ENCODE measurements at regions of chr10 and their contacts with region 1.

Region 1: DNA sequence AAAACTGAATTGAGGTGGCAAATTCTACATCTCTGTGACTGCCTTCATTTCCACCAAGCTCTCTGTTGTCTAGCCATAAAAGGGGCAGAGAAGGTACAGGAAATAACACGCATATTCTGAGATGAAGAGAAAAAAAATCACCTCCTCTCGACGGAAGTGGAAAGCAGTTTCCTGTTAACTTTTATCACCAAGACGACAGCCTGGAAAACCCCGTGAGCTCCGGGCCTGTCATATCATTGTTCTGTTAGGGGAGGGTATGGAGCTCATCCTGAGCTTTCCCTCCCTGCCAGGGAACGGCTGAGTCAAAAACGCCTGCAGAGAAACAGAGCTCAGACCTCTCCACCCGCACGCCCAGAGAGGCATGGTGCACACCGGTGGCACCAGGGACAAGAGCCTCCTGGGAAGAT is 200.3 kb downstream of the PRPF18 start:
- DNase-seq: peak in 3 of 5 donors; percentile 27 to 39 (median 29)
- ATAC-seq: peak in 2 of 4 donors; percentile 15 to 61
- H3K4me3 ChIP-seq: peak overlapping the region in 1 of 12 donors; percentile 25
- H3K27ac ChIP-seq: peak overlapping the region in 9 of 12 donors; percentile 3 to 81 (median 20)
- H3K4me1 ChIP-seq: peaks cover 3 to 47% (median 28%) of the 10 kb centered on the region in 12 donors
- H3K27me3 ChIP-seq: no peaks in the 10 kb centered on the region
- CTCF ChIP-seq: no peak
- POLR2A ChIP-seq: no peak

Region 2: DNA sequence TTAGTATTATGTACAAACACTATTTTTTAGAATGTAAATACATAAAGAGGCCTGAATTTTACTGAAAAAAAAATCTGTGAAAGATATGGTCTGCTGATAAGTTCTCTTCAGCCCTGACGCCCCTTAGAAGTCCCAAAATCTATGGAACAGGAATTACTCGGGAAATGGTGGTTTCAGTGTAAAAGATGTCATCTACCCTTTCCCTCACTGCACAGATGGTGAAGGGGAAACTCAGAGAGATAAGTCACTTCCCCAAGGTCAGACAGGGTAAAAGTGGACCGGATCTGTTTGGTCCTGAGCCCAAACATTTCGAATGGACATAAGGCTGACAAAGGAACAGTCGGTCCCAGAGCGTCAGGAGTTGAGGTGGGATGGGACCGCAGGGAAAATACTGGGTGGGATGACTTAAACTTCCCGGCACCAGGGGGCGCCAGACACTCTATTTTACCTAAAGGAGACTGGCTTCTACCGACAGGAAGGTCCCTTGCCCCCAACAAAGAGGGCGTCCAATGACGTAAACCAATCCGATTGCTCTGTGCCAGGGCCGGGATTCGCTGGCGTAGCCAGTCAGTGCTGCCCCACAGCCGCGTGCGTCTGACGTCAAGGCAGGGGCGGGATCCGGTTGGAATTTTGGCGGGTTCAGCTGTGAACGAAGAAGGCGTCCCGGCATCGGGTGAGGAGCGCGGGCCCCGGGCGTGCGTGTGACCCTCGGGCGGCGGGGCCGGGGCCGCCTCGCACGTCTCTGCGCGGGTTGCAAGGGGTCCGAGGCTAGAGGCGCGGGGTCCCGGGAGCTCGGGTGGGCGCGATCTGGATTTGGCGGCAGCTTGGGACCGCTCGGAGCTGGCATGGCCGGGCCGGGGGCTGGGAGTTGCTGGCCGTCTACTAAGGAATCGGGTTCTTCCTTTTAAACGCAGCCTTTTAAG is 625.8 kb before region 1 on chr10 and contains the start of gene MCM10:
- intact Hi-C with region 1: no loop called
- DNase-seq: peak; percentile 97 to 98 (median 98)
- ATAC-seq: peak; percentile 100
- H3K4me3 ChIP-seq: peak within 1 kb of the TSS in 11 of 12 donors; percentile 24 to 72 (median 51)
- H3K27ac ChIP-seq: no peak within 1 kb of the TSS
- H3K4me1 ChIP-seq: peaks cover 0 to 18% (median 9%) of the 10 kb centered on the region in 12 donors
- H3K27me3 ChIP-seq: no peaks in the 10 kb centered on the region
- CTCF ChIP-seq: peak; percentile 82 to 95 (median 88)
- POLR2A ChIP-seq: no peak
- total RNA-seq, gene MCM10: 0.16 to 4.2 (median 0.36) TPM in 6 of 9 donors, not detected in the others

Region 3: DNA sequence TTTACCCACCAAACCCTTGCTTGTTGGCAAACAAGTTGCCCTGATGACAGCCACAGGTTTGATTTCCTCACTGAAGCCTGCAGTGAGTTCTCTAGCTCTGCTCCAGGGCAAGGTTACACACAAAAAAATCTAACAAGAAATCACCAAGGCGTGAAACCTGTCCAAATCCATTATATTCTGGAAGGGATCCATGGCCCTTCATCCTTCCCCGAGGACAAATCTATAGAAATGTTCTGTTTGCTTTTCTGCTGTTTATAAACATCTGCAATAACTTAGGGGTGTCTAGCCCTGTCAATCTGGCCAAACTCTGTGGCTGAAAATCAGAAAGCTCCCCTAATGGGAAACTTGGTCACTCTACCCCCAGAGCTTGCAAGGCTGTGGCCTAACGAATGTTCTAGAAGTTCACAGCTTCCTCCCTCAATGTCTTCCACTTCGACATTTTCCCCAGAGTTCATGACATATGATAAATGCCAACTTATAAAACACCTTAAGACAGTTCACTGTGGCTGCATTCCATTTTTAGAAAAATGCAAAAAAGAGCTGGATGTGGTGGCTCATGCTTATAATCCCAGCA is 35.7 kb before region 1 on chr10:
- intact Hi-C with region 1: no loop called
- DNase-seq: no peak
- ATAC-seq: no peak
- H3K4me3 ChIP-seq: no peak overlapping the region
- H3K27ac ChIP-seq: no peak overlapping the region
- H3K4me1 ChIP-seq: peaks cover 0 to 5% (median 0%) of the 10 kb centered on the region in 12 donors
- H3K27me3 ChIP-seq: no peaks in the 10 kb centered on the region
- CTCF ChIP-seq: no peak
- POLR2A ChIP-seq: no peak

Region 4: DNA sequence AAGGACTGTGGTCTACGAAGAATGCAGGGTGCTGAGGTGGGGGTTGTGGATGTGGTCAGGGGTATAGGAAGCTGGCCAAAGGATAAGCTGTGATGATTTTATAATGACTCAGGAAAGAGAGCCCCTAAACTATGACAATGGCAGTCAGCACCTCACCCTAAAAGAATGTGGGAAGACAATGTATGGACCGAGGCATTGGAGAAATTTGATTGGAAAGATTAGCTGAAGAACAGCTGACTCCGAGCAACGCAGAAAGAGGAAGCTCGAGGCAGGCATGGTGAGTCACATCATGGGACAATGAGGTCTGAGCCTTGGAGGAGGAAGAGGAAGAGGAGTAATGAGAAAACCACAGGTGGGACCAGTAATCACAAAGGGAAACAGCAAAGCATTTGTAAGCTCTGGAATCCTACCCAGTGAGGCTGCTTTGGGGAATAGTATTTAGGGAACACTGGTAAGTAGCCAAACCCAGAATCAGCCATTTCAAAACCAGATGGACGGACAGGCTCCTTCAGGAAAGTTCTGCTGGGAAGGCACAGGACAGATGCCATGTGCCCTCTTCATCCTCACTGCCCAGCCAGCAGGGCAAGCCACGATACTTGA is 95.2 kb after region 1 on chr10:
- intact Hi-C with region 1: loop called in 1 of 10 experiments (anchors 5 kb)
- DNase-seq: peak in 4 of 5 donors; percentile 65 to 73 (median 70)
- ATAC-seq: peak; percentile 69 to 90 (median 79)
- H3K4me3 ChIP-seq: no peak overlapping the region
- H3K27ac ChIP-seq: peak overlapping the region; percentile 67 to 90 (median 79)
- H3K4me1 ChIP-seq: peaks cover 0 to 58% (median 39%) of the 10 kb centered on the region in 12 donors
- H3K27me3 ChIP-seq: no peaks in the 10 kb centered on the region
- CTCF ChIP-seq: no peak
- POLR2A ChIP-seq: no peak

Region 5: DNA sequence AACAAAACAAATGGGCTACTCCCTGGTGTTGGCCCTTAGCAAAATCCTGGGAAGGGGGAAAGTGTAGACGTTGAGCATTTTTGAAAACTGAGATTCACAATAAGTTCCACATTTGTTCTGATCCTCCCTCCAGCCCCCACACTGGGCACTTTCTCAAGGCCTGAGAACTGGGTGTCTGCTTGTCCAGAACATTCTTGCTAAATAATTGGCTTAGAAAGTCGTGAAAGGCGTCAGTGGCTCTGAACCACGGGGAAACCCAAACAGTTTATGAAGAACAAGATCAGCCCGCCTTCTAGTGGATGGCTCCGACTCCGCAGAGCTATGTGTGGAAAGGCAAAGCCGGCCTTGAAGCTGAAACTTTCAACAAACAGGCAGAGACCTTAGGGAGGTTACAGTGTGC is 169.8 kb after region 1 on chr10:
- intact Hi-C with region 1: loop called in 5 of 10 experiments (anchors 2 to 10 kb)
- DNase-seq: peak; percentile 54 to 78 (median 62)
- ATAC-seq: peak; percentile 69 to 90 (median 83)
- H3K4me3 ChIP-seq: no peak overlapping the region
- H3K27ac ChIP-seq: peak overlapping the region in 7 of 12 donors; percentile 38 to 74 (median 45)
- H3K4me1 ChIP-seq: peaks cover 0 to 30% (median 12%) of the 10 kb centered on the region in 12 donors
- H3K27me3 ChIP-seq: no peaks in the 10 kb centered on the region
- CTCF ChIP-seq: peak in 7 of 12 donors; percentile 25 to 67 (median 47)
- POLR2A ChIP-seq: no peak

Region 6: GRCh38 chr10:13990946-13991345 is 203.9 kb after region 1 on chr10:
- intact Hi-C with region 1: loop called in 3 of 10 experiments (anchors 2 to 5 kb)
- DNase-seq: peak in 2 of 5 donors; percentile 31
- ATAC-seq: peak; percentile 27 to 53 (median 40)
- H3K4me3 ChIP-seq: peak overlapping the region in 7 of 12 donors; percentile 3 to 39 (median 24)
- H3K27ac ChIP-seq: peak overlapping the region; percentile 59 to 89 (median 80)
- H3K4me1 ChIP-seq: peaks cover 0 to 60% (median 35%) of the 10 kb centered on the region in 12 donors
- H3K27me3 ChIP-seq: no peaks in the 10 kb centered on the region
- CTCF ChIP-seq: no peak
- POLR2A ChIP-seq: no peak

Region 7: DNA sequence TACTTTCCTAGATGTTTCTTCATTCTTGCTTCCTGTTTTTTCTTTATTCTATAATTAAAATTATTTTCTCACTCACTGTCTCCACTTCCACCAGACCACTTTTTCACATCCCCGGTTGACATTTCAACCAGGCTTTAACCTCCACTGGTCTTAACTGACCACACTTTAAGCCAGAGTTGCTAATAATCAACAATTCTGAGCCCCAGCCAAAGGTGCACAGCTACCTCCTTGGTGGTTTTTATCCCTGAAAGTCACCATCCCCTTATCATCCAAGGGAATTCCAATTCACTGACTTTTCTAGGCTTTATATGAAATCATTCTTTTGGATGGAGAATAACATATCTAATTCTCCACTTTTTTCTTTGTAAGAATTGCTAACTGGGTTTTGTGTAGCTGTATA is 404.9 kb after region 1 on chr10:
- intact Hi-C with region 1: loop called in 1 of 10 experiments (anchors 5 kb)
- DNase-seq: no peak
- ATAC-seq: no peak
- H3K4me3 ChIP-seq: no peak overlapping the region
- H3K27ac ChIP-seq: no peak overlapping the region
- H3K4me1 ChIP-seq: no peaks in the 10 kb centered on the region
- H3K27me3 ChIP-seq: peaks cover 0 to 23% (median 3%) of the 10 kb centered on the region in 9 donors
- CTCF ChIP-seq: no peak
- POLR2A ChIP-seq: no peak

Region 8: DNA sequence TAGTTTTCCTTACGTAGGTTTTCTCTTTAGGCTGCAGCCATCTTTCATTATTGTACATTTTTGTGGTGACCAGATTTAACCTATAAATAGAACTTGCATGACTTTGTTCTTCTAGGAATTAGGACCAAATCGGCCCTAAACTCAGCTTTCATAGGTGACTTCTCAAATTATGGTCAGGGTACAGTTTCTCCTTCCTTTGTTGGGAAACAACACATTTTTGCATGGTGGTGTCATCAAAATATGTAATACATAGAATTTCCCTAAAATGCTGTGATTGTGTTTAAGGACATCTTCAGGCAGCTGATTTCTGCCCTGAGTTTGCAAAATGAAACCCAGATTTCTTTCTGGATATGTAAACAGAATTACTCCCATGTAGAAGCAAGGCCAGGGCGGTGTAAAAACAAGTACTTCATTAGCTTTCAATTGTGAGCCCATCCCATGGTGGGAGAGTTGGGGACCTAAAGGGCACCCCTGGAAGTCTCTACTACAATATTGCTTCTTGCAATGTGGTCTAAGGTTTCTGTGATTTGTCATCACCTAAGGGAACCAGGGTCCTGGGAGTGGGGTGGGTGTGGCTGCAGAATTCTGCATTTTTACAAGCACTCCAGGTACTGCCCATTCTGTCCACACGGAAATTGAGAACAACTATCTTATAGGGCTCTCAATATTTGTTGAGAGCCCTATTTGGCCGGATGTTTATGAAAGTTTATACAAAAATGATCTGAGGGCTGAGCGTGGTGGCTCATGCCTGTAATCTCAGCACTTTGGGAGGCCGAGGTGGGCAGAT is 1705.0 kb after region 1 on chr10:
- intact Hi-C with region 1: no loop called
- DNase-seq: no peak
- ATAC-seq: no peak
- H3K4me3 ChIP-seq: no peak overlapping the region
- H3K27ac ChIP-seq: no peak overlapping the region
- H3K4me1 ChIP-seq: no peaks in the 10 kb centered on the region
- H3K27me3 ChIP-seq: no peaks in the 10 kb centered on the region
- CTCF ChIP-seq: no peak
- POLR2A ChIP-seq: no peak

Measured in heart left ventricle (tissue), 16 donors.